ENCODE measurements at regions of chr9 and their contacts with region 1.

Region 1: GRCh38 chr9:69421908-69422801 is 97.1 kb downstream of the ENTREP1 start:
- DNase-seq: peak; percentile 47
- ATAC-seq: peak; percentile 91
- H3K4me3 ChIP-seq: no peak overlapping the region
- H3K27ac ChIP-seq: no peak overlapping the region
- H3K4me1 ChIP-seq: no peaks in the 10 kb centered on the region
- H3K27me3 ChIP-seq: no peaks in the 10 kb centered on the region
- CTCF ChIP-seq: peak; percentile 68 to 87 (median 82)
- POLR2A ChIP-seq: no peak
- RAD21 ChIP-seq: peak; percentile 95

Region 2: GRCh38 chr9:69672596-69673310 is 250.6 kb after region 1 on chr9:
- CTCF ChIA-PET with region 1: interaction called, 9 read pairs
- POLR2A ChIA-PET with region 1: no interaction called
- RAD21 ChIA-PET with region 1: no interaction called
- intact Hi-C with region 1: loop called (anchors 5 kb)
- DNase-seq: peak; percentile 77
- ATAC-seq: peak; percentile 93
- H3K4me3 ChIP-seq: peak overlapping the region; percentile 47 to 55
- H3K27ac ChIP-seq: peak overlapping the region; percentile 1; the same call in 1 of the 2 replicates
- H3K4me1 ChIP-seq: peaks cover 3 to 14% of the 10 kb centered on the region in 2 experiments; a peak in 3 of 4 replicates
- H3K27me3 ChIP-seq: peaks cover 6% of the 10 kb centered on the region; the same call in 1 of the 2 replicates
- CTCF ChIP-seq: peak; percentile 67 to 85 (median 76)
- POLR2A ChIP-seq: no peak
- RAD21 ChIP-seq: peak; percentile 63

Region 3: GRCh38 chr9:69919461-69920061 is 497.4 kb after region 1 on chr9:
- CTCF ChIA-PET with region 1: interaction called, 6 read pairs
- POLR2A ChIA-PET with region 1: no interaction called
- RAD21 ChIA-PET with region 1: no interaction called
- intact Hi-C with region 1: loop called (anchors 5 kb)
- DNase-seq: peak; percentile 29
- ATAC-seq: peak; percentile 89
- H3K4me3 ChIP-seq: no peak overlapping the region
- H3K27ac ChIP-seq: no peak overlapping the region
- H3K4me1 ChIP-seq: no peaks in the 10 kb centered on the region
- H3K27me3 ChIP-seq: peaks cover 20% of the 10 kb centered on the region
- CTCF ChIP-seq: peak; percentile 60 to 72 (median 63); a peak in 5 of 6 replicates
- POLR2A ChIP-seq: no peak
- RAD21 ChIP-seq: peak; percentile 73

Region 4: DNA sequence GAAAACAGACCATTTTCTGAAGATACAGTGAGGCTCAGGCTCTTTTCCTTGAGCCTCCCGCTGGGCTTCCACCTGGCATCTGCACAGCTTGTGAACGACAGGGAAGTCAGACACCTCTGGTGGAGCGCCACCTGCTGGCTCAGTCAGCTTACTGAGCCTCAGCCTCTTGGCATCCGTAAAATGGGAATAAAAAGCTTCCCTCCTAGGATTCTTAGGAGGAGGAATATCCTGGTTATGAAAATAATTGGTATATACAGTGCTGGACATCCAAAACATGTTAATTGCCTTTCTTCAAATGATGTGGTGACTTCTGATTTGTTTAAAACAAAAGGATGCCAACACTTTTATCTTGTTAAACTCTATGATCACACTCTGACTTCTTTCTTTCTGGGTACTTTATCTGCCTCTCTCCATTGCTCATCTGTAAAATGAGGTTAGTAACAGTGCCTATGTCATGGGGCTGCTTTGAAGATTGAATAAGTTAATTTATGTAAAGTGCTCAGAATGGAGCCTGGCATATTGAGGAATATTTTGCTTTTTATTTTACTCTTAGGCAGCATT is 689.0 kb after region 1 on chr9:
- CTCF ChIA-PET with region 1: interaction called, 6 read pairs
- POLR2A ChIA-PET with region 1: no interaction called
- RAD21 ChIA-PET with region 1: interaction called in 1 of 2 experiments, 3 read pairs
- intact Hi-C with region 1: loop called (anchors 2 kb)
- DNase-seq: peak; percentile 66
- ATAC-seq: peak; percentile 82
- H3K4me3 ChIP-seq: no peak overlapping the region
- H3K27ac ChIP-seq: no peak overlapping the region
- H3K4me1 ChIP-seq: peaks cover 4 to 32% of the 10 kb centered on the region in 2 experiments; a peak in 3 of 4 replicates
- H3K27me3 ChIP-seq: no peaks in the 10 kb centered on the region
- CTCF ChIP-seq: peak; percentile 85 to 94 (median 93)
- POLR2A ChIP-seq: no peak
- RAD21 ChIP-seq: peak; percentile 88

Region 5: GRCh38 chr9:70602321-70603019 is 1180.3 kb after region 1 on chr9:
- CTCF ChIA-PET with region 1: interaction called, 6 read pairs
- POLR2A ChIA-PET with region 1: no interaction called
- RAD21 ChIA-PET with region 1: no interaction called
- intact Hi-C with region 1: loop called (anchors 2 kb)
- DNase-seq: peak; percentile 65
- ATAC-seq: peak; percentile 98
- H3K4me3 ChIP-seq: no peak overlapping the region
- H3K27ac ChIP-seq: no peak overlapping the region
- H3K4me1 ChIP-seq: no peaks in the 10 kb centered on the region
- H3K27me3 ChIP-seq: no peaks in the 10 kb centered on the region
- CTCF ChIP-seq: peak; percentile 62 to 83 (median 73); a peak in 5 of 6 replicates
- POLR2A ChIP-seq: no peak
- RAD21 ChIP-seq: peak; percentile 92

Measured in HCT116 (cell line).